ENCODE measurements at regions of chr3 and their contacts with region 1.

Region 1: GRCh38 chr3:120558771-120559241 is 37.3 kb upstream of the NDUFB4 start:
- DNase-seq: peak; percentile 76
- H3K4me3 ChIP-seq: peak overlapping the region; percentile 72
- H3K27ac ChIP-seq: peak overlapping the region; percentile 86
- H3K27me3 ChIP-seq: no peaks in the 10 kb centered on the region
- CTCF ChIP-seq: peak; percentile 92

Region 2: GRCh38 chr3:120348981-120349818 is 209.6 kb before region 1 on chr3 and contains the start of gene LRRC58:
- CTCF ChIA-PET with region 1: interaction called, 12 read pairs
- POLR2A ChIA-PET with region 1: no interaction called
- DNase-seq: peak; percentile 74
- H3K4me3 ChIP-seq: peak within 1 kb of the TSS; percentile 84
- H3K27ac ChIP-seq: peak within 1 kb of the TSS; percentile 91
- H3K27me3 ChIP-seq: no peaks in the 10 kb centered on the region
- CTCF ChIP-seq: peak; percentile 33; the same call in 1 of the 2 replicates
- polyA plus RNA-seq, gene LRRC58: 9.9 and 15.0 TPM in 2 replicates

Region 3: DNA sequence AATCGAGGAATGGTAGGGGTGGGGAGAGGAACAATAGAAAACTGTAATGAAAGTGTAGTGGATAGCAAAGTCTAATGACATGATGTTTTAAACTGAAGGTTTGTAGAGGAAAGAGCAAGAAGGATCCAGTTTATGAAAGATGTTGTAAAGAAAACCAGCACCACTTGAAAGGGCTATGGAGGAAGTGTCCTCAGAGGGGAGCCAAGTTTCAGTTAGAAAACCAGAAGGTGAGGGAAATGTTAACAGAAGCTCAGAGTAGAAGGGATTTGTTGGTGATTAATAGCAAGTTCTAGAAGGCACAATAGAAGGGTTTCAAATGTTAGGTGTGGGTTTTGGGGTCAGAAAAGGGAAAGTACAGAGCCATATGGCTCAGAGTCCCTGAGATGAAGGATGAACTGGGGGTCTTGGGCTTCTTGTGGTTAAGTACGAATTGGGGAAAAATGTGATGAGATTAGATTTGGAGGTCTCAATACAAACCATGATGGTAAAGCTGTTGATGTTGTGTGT is 175.8 kb before region 1 on chr3:
- CTCF ChIA-PET with region 1: no interaction called
- POLR2A ChIA-PET with region 1: no interaction called
- DNase-seq: no peak
- H3K4me3 ChIP-seq: no peak overlapping the region
- H3K27ac ChIP-seq: no peak overlapping the region
- H3K27me3 ChIP-seq: peaks cover 3% of the 10 kb centered on the region
- CTCF ChIP-seq: no peak

Region 4: DNA sequence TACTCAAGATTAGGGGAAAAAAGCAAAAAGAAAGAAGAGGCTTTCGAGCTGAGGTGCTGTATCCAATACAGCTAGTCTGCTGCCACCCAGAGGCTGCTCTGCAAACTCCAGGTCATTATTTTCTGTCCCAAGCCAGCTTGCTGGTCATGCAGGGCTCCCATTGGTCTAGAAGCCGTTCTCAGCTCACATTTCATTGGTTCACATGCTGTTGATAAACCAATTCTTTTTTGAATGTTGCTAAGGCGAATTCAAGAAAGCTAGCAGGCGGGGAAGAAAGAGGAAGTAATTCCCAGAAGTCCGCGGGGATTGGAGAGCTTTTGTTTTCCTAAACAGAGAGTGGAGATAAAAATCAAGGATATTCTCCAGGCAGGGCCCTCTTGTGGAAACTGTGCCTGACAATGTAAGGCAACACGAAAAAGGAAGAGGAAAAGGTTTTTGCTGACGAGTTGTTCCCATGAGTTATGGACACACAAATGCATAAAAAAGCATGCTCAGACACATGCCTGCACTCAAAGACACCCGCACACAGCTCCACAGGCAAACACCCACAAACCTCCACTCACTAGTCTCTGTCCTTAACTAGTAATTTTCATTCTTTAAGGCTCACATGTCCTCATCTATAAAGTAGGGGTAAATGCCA is 141.4 kb before region 1 on chr3:
- CTCF ChIA-PET with region 1: interaction called, 209 read pairs
- POLR2A ChIA-PET with region 1: interaction called, 5 read pairs
- DNase-seq: peak; percentile 97
- H3K4me3 ChIP-seq: peak overlapping the region; percentile 32
- H3K27ac ChIP-seq: peak overlapping the region; percentile 62
- H3K27me3 ChIP-seq: no peaks in the 10 kb centered on the region
- CTCF ChIP-seq: peak; percentile 76

Region 5: DNA sequence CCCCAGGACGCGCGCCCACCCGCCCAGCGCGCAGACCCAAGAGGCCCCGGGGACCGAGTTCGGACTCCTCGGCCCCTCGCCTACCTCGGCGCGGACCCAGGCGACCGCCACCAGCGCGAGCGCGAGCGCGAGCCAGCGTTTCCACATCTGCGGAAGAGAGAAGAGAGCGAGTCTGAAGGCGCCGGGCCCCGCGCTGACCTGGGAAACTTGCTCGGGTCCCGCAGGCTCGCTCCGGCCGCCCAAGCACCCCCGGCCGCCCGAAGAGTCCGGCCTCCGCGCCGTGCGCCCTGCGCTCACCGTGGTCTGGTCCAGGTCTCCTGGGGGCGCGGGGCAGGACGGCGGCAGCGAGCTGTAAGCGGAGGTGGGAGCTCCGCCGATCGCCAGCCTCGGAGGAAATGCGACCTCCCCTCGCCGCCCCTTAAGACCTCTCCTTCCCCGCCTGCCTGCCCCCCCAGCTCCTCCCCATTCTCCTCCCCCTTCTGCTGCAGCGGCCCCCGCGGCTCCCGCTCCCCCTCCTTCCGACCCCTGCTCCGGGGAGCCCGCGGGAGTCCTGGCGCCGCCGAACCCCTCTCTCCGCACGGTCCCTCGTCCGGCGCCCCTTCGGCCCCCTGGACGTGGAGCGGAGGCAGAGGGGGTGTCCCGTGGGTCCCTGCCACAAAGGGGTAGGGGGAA is 108.1 kb before region 1 on chr3 and contains the start of gene FSTL1:
- CTCF ChIA-PET with region 1: interaction called, 28 read pairs
- POLR2A ChIA-PET with region 1: interaction called, 17 read pairs
- DNase-seq: no peak
- H3K4me3 ChIP-seq: peak within 1 kb of the TSS; percentile 84
- H3K27ac ChIP-seq: peak within 1 kb of the TSS; percentile 95
- H3K27me3 ChIP-seq: no peaks in the 10 kb centered on the region
- CTCF ChIP-seq: no peak
- polyA plus RNA-seq, gene FSTL1: 1,126 and 1,300 TPM in 2 replicates

Region 6: GRCh38 chr3:120596116-120596852 is 37.5 kb after region 1 on chr3 and contains the start of gene NDUFB4:
- CTCF ChIA-PET with region 1: interaction called, 30 read pairs
- POLR2A ChIA-PET with region 1: no interaction called
- DNase-seq: peak; percentile 98
- H3K4me3 ChIP-seq: peak within 1 kb of the TSS; percentile 85
- H3K27ac ChIP-seq: peak within 1 kb of the TSS; percentile 88
- H3K27me3 ChIP-seq: no peaks in the 10 kb centered on the region
- CTCF ChIP-seq: no peak
- polyA plus RNA-seq, gene NDUFB4: 174 and 183 TPM in 2 replicates

Measured in AG04450 (cell line).